CD14-positive monocyte (primary cell): ENCODE measurements at regions of chr14 and their contacts with region 1.

Region 1: DNA sequence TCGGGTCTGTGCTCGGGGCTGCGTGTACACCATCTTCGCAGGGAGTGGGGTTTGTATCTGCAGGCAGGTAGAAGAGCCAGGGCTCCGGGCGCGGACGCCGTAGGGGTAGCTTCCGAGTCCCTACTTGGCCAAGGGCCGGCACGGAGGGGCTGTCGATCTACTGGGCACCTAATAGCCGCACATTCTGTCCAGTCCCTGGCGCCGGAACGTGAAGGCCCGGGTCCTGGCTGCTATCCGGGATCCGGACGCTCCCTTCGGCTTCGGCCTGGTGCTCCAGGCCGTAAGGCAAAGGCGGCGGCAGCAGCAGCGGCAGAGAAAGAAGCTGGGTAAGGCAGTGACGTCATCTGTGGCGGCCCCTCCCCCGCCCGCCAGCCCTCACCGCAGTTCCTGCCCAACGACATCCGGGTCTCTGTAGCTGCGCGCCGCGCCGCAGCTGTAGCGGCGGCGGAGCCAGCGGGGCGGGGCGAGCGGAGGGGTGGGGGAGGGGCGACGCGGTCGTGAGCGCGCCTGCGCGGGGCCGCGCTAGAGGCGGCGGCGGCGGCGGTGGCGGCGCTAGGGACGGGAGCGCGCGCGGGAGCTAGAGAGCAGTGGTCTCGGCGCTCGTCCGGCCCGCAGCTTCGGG is at the start of gene PPM1A:
- DNase-seq: peak; percentile 96 to 97 (median 96)
- H3K4me3 ChIP-seq: peak within 1 kb of the TSS; percentile 92 to 98 (median 93)
- H3K4me3 Mint-ChIP-seq: peak within 1 kb of the TSS; percentile 87 to 95
- H3K27ac ChIP-seq: peak within 1 kb of the TSS; percentile 98 to 99
- H3K27ac Mint-ChIP-seq: peak within 1 kb of the TSS; percentile 97 to 100 (median 99)
- H3K4me1 ChIP-seq: peaks cover 35 to 41% of the 10 kb centered on the region in 2 donors
- H3K4me1 Mint-ChIP-seq: peaks cover 51% of the 10 kb centered on the region
- H3K27me3 ChIP-seq: no peaks in the 10 kb centered on the region
- H3K27me3 Mint-ChIP-seq: peaks cover 0 to 3% (median 1%) of the 10 kb centered on the region in 3 donors
- CTCF ChIP-seq: no peak
- polyA plus RNA-seq, gene PPM1A: 18.4 to 34.1 (median 21.5) TPM

Region 2: DNA sequence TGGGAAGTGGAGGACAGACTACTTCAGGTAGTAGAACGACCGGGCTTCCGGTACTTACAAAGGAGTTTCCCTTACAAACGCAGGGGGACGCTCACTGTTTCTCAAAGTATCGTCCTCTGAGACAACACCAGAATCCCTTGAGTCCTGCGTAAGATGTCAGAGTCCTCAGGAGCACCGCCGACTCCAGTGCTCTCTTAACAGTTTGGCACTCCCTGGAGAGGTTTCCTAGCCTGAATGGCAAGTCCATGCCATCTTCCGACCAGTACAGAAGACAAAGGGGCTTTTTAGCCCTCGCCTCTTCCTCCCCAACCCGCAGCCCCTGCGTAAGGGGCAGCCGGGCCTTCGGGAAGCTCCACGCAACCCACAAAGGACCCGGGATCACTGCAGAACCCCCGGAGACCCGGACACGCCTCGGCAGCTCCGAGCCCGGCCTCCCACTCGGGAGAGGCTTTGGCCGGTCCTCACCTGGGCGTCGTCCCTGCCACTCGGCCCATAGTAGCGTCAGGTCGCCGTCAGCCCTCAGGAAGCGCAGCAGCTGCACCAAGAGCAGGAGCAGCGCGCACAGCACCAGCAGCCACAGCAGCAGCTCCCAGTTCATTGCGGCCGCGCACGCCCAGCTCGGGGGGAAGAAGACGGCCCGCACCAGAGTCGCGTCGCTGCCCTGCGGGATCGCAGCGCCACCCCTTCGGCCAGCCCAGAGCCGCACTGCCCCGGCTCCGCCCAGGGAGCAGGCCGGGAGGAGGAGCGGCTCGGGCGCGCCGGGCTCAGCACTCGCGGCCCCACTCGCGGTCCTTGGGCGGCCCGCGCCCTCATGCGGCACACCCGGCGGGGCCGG is 83.9 kb before region 1 on chr14 and contains the start of gene DHRS7:
- intact Hi-C with region 1: loop called in 1 of 2 experiments (anchors 10 kb)
- DNase-seq: peak; percentile 80 to 82 (median 81)
- H3K4me3 ChIP-seq: peak within 1 kb of the TSS; percentile 69 to 96 (median 92)
- H3K4me3 Mint-ChIP-seq: peak within 1 kb of the TSS; percentile 97
- H3K27ac ChIP-seq: peak within 1 kb of the TSS; percentile 84 to 98
- H3K27ac Mint-ChIP-seq: peak within 1 kb of the TSS; percentile 95 to 99 (median 96)
- H3K4me1 ChIP-seq: peaks cover 34 to 41% of the 10 kb centered on the region in 2 donors
- H3K4me1 Mint-ChIP-seq: peaks cover 43% of the 10 kb centered on the region
- H3K27me3 ChIP-seq: no peaks in the 10 kb centered on the region
- H3K27me3 Mint-ChIP-seq: peaks cover 0 to 4% (median 0%) of the 10 kb centered on the region in 3 donors
- CTCF ChIP-seq: peak; percentile 34
- polyA plus RNA-seq, gene DHRS7: 55.4 to 223 (median 218) TPM